ENCODE measurements at regions of chr2 and their contacts with region 1.

Region 1: GRCh38 chr2:225670111-225670974 is 270.8 kb downstream of the NYAP2 start:
- DNase-seq: no peak
- ATAC-seq: no peak

Region 2: DNA sequence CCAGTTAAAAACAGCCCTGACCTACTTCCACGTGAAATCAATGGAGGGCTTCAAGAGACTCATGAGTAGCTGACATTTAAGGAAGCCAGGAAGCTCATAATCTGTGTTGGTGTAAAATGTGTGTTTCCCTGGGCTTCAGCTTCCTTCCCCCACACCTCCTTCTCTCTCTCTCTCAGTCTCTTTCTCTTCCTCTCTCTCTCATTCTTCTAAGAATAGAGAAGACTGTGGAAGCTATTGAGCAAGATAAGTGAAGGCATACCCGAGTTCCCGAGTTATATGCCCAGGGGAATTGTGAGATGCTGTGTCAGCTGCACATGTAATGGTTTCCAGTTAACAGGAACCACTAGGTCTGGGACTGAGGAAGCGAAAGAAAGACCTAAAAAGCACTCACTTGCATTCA is 71.4 kb before region 1 on chr2:
- intact Hi-C with region 1: no loop called
- DNase-seq: no peak
- ATAC-seq: no peak

Region 3: DNA sequence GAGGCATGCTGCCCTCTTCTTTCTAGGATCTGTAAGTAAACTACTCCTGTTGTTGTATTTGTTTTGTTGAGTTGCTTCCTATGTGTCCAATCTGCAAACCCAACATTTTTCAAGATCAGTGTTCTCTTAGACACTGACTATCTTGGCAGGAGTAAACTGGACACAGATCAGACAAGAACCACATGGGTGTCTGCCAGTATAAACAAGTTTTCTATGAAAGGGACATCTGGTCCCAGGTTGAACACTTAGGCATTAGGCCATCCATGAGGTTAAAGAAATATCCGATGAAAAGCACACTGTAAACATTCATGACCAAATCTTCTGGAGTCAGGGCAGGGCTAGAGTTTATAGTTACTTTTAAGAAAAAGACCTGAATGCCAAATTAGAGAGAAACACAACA is 171.0 kb after region 1 on chr2:
- intact Hi-C with region 1: no loop called
- DNase-seq: no peak
- ATAC-seq: no peak

Region 4: GRCh38 chr2:226984750-226985582 is 1314.6 kb after region 1 on chr2:
- intact Hi-C with region 1: loop called (anchors 5 kb)
- DNase-seq: no peak
- ATAC-seq: peak; percentile 74

Region 5: DNA sequence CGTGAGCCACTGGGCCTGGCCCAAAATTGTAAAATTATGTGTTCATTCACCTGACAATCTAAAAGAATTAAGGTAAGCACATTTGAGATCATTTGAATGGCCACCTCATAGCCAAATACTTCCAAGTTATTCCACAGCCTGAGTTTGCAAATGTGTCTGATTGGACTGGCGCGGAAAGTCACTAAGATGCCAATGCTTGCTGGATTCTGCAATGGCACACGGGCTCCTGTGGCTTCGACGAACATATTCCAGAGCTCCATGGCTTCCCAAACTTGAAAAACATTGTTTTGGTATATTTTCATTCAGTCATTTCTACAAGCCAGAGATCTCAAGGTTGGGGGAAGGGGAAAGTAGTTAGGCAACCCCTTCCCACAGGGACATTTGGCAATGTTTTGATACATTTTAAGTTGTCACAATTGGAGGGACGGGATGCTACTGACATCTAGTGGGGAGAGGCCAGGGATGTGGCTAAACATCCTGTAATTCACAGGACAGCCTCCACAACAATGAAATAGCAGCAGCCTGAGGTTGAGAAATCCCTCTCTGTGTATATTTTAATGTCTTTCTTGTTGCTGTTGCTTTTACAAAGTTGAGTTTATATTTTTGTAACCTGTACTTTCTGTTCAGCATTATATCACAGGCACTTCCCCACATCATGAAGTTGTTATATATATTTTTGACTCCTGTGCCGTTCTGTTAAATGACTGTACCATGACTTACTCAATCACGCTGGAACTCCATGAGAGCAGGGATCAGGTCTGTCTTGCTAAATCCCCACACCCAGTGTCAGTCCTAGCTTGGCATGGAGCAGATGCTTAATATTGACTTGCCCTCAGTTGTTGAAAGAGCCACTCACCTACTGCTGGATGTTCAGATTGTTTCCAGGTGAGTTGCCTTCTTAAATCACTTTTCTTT is 1436.8 kb after region 1 on chr2:
- intact Hi-C with region 1: loop called (anchors 5 kb)
- DNase-seq: no peak
- ATAC-seq: peak; percentile 71